B cell (primary cell): ENCODE measurements at regions of chr3 and their contacts with region 1.

Region 1: GRCh38 chr3:25618028-25618427 is 46.7 kb downstream of the TOP2B start:
- DNase-seq: no peak
- ATAC-seq: no peak
- H3K4me3 ChIP-seq: no peak overlapping the region
- H3K4me3 Mint-ChIP-seq: no peak overlapping the region
- H3K27ac ChIP-seq: no peak overlapping the region
- H3K27ac Mint-ChIP-seq: no peak overlapping the region
- H3K4me1 ChIP-seq: no peaks in the 10 kb centered on the region
- H3K4me1 Mint-ChIP-seq: no peaks in the 10 kb centered on the region
- H3K27me3 ChIP-seq: no peaks in the 10 kb centered on the region
- H3K27me3 Mint-ChIP-seq: no peaks in the 10 kb centered on the region
- CTCF ChIP-seq: no peak

Region 2: DNA sequence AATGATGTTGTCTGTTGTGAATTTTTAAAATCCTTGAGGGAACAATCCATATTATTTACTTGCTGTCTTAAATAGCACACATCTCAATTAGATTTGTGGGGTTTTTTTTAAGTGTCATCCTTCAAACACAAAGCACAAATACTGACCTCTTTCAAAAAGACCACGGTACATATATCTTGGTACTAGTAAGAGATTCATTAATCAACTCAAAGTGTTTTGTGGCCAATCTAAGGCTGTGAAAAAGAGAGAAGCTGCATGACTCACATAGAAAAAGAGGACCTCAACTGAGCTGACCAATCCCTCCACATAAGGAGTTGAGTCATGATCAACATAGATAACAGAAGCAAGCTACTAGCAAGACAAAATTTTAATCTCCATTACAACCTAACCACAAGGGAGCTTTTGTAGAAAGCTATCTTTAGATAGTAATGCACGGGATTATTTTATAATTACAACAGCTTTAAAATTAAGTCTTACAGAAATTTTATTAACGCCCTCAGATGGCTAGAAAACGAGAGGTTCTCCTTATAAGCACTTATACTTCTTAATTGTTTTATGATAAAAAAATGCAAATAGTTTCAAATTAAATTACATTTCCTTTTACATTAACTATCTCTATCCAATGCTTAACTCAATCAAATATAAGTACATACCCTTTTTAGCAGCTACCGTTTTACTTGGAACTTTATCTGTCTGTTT is 13.8 kb before region 1 on chr3:
- CTCF ChIA-PET with region 1: no interaction called
- POLR2A ChIA-PET with region 1: no interaction called
- intact Hi-C with region 1: loop called (anchors 2 kb)
- DNase-seq: no peak
- ATAC-seq: no peak
- H3K4me3 ChIP-seq: no peak overlapping the region
- H3K4me3 Mint-ChIP-seq: no peak overlapping the region
- H3K27ac ChIP-seq: no peak overlapping the region
- H3K27ac Mint-ChIP-seq: no peak overlapping the region
- H3K4me1 ChIP-seq: no peaks in the 10 kb centered on the region
- H3K4me1 Mint-ChIP-seq: no peaks in the 10 kb centered on the region
- H3K27me3 ChIP-seq: no peaks in the 10 kb centered on the region
- H3K27me3 Mint-ChIP-seq: no peaks in the 10 kb centered on the region
- CTCF ChIP-seq: no peak